HepG2 (cell line): ENCODE measurements at regions of chr4 and their contacts with region 1.

Region 1: DNA sequence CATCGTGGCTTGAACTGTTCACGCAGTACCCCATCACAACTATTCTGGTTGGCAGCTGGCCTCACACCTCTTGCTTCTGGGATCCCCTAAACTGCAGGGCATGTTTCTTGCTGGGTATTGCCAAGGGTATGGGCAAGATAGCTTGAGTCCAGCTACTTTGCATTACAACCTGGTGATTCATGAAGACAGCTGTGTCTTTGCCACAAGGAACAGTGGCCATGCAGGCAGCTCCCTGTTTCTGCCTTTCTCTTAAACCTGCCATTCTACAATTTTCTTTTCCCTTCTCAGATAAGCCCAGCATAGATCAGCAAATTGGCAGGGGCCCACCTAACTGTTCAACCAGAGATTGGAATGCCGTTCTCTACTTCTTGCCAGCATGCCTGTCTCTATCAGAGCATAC is 42.8 kb downstream of the TENM3 start:
- DNase-seq: no peak
- ATAC-seq: no peak
- H3K4me3 ChIP-seq: no peak overlapping the region
- H3K27ac ChIP-seq: no peak overlapping the region
- H3K4me1 ChIP-seq: no peaks in the 10 kb centered on the region
- H3K27me3 ChIP-seq: 0 out of 5 replicates have a peak, but pooled peaks cover 0 to 3% of the 10 kb centered on the region in 2 experiments
- CTCF ChIP-seq: no peak
- EP300 ChIP-seq: no peak
- POLR2A ChIP-seq: no peak
- RAD21 ChIP-seq: no peak

Region 2: DNA sequence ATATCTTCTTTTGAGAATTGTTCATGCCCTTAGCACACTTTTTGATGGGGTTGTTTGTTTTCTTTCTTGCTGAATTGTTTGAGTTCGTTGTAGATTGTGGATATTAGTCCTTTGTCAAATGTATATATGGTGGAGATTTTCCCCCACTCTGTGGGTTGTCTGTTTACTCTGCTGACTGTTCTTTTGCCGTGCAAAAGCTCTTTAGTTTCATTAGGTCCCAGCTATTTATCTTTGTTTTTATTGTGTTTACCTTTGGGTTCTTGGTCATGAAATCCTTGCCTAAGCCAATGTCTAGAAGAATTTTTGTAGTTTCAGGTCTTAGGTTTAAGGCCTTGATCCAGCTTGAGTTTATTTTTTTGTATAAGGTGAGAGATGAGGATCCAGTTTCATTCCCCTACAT is 1415.4 kb before region 1 on chr4:
- CTCF ChIA-PET with region 1: no interaction called
- POLR2A ChIA-PET with region 1: no interaction called
- in situ Hi-C with region 1: no loop called
- intact Hi-C with region 1: loop called (anchors 5 kb)
- DNase-seq: no peak
- ATAC-seq: no peak
- H3K4me3 ChIP-seq: no peak overlapping the region
- H3K27ac ChIP-seq: no peak overlapping the region
- H3K4me1 ChIP-seq: no peaks in the 10 kb centered on the region
- H3K27me3 ChIP-seq: no peaks in the 10 kb centered on the region
- CTCF ChIP-seq: no peak
- EP300 ChIP-seq: no peak
- POLR2A ChIP-seq: no peak
- RAD21 ChIP-seq: no peak

Region 3: DNA sequence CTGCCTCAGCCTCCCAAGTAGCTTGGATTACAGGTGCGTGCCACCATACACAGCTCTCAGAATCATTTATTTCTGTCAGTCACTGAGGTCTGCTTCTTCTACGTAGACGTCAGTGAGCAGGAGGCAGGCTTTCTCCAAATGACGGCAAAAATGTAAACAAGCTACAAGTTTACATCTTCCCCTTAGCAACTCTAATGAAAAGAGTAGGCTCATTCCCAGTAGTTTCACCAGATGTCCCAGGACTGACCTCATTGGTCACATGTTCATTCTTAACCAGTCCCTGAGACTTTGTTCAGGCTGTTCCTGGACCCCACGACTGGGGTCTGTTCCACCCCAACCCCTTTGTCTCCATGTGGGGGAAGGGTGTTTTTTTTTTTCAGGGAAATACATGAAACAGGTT is 24.3 kb after region 1 on chr4:
- CTCF ChIA-PET with region 1: no interaction called
- POLR2A ChIA-PET with region 1: no interaction called
- in situ Hi-C with region 1: no loop called
- intact Hi-C with region 1: no loop called
- DNase-seq: no peak
- ATAC-seq: no peak
- H3K4me3 ChIP-seq: no peak overlapping the region
- H3K27ac ChIP-seq: no peak overlapping the region
- H3K4me1 ChIP-seq: no peaks in the 10 kb centered on the region
- H3K27me3 ChIP-seq: no peaks in the 10 kb centered on the region
- CTCF ChIP-seq: no peak
- EP300 ChIP-seq: no peak
- POLR2A ChIP-seq: no peak
- RAD21 ChIP-seq: no peak